ENCODE measurements at regions of chr9 and their contacts with region 1.

Region 1: DNA sequence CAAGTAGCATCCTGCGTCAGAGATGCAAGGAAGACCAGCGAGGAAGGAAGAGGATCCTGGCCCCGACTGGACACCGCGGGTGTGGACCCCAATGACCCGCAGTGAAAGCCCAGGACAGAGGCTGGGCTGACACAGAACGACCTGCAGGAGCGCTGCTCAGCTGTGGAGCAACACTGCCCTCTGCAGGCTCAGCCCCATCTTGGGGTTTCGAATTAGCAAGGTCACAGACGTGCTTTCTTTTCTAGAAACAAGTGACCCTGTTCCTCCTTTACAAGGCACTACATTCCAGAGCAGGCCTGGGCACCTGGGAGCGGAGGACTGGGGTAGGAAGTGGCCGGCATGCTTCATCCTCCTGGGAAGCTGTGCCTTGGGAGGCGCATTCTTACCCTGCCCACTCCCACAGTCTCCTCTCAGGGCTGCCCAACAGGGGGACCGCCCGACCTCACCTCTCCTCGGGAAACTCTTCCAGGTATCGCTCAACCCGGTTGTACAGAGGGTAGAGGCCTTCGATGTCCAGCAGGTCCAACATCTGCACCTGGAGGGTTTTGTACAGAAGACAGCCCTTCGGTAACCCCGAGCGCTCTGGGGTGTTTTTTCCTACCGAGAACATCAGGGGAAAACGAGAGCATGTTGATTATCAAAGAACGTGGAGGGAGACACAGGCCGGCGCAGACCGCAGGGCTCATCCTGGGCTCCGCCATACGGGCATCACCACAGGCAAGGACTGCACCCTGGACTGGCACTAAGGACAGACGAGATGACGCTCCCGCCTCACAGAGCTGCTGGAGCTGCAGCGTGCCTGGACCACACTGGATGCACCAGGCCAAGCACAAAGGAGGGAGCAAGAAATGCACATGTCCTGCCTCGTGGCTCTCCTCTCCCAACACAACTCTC is 35.0 kb downstream of the IPPK start:
- DNase-seq: peak; percentile 91
- ATAC-seq: peak; percentile 94

Region 2: DNA sequence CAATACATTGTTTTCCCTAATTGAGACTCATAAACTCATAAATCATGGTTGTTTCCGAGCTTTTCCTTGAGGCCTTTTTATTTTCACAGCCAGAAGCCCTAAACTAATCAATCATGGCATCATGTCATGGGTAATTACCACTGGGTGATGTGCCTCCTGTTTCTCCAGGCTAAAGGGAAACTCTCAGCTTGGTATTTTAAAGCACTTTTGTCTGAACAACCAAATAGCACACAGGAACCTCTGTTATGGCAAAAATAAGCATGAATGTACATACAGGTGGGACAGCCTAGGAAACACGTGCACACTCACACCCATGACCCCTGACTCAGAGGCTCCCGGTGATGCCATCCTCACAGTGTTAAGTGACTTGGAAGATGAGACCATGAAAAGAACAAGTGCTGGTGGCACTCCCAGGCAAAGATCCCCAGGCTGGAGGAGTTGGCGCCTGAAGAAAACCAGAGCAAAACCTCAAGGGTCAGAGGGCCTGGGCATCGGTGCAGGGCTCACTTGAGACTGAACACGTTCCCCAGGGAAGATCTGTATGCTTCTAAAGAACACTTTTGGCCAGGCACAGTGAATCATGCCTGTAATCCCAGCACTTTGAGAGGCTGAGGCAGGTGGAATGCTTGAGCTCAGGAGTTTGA is 839.2 kb before region 1 on chr9:
- intact Hi-C with region 1: no loop called
- DNase-seq: no peak
- ATAC-seq: no peak

Region 3: GRCh38 chr9:92325269-92325990 is 309.5 kb before region 1 on chr9 and contains the starts of genes CENPP and NOL8:
- intact Hi-C with region 1: loop called (anchors 10 kb)
- DNase-seq: peak; percentile 91
- ATAC-seq: peak; percentile 99
- total RNA-seq, gene CENPP: 9.1 TPM
- total RNA-seq, gene NOL8: 53.0 TPM

Measured in sciatic nerve (tissue), 2 donors.